ENCODE measurements at regions of chr7 and their contacts with region 1.

Region 1: GRCh38 chr7:95871078-95871782 is 98.9 kb downstream of the DYNC1I1 start:
- DNase-seq: no peak
- ATAC-seq: peak; percentile 69
- H3K4me3 ChIP-seq: no peak overlapping the region
- H3K27ac ChIP-seq: no peak overlapping the region
- H3K4me1 ChIP-seq: no peaks in the 10 kb centered on the region
- H3K27me3 ChIP-seq: no peaks in the 10 kb centered on the region
- CTCF ChIP-seq: peak; percentile 55 to 77 (median 63)
- EP300 ChIP-seq: no peak
- POLR2A ChIP-seq: no peak
- RAD21 ChIP-seq: peak; percentile 70

Region 2: GRCh38 chr7:95527033-95527775 is 344.0 kb before region 1 on chr7:
- CTCF ChIA-PET with region 1: interaction called, 45 read pairs
- POLR2A ChIA-PET with region 1: no interaction called
- RAD21 ChIA-PET with region 1: interaction called, 15 read pairs
- SMC1A ChIA-PET with region 1: interaction called, 24 read pairs
- in situ Hi-C with region 1: no loop called
- intact Hi-C with region 1: loop called (anchors 5 kb)
- DNase-seq: no peak
- ATAC-seq: peak; percentile 92
- H3K4me3 ChIP-seq: no peak overlapping the region
- H3K27ac ChIP-seq: no peak overlapping the region
- H3K4me1 ChIP-seq: no peaks in the 10 kb centered on the region
- H3K27me3 ChIP-seq: no peaks in the 10 kb centered on the region
- CTCF ChIP-seq: peak; percentile 73 to 83 (median 82)
- EP300 ChIP-seq: no peak
- POLR2A ChIP-seq: no peak
- RAD21 ChIP-seq: peak; percentile 96

Region 3: GRCh38 chr7:95730493-95731280 is 140.5 kb before region 1 on chr7:
- CTCF ChIA-PET with region 1: interaction called, 421 read pairs
- POLR2A ChIA-PET with region 1: no interaction called
- RAD21 ChIA-PET with region 1: interaction called, 183 read pairs
- SMC1A ChIA-PET with region 1: interaction called, 176 read pairs
- in situ Hi-C with region 1: no loop called
- intact Hi-C with region 1: no loop called
- DNase-seq: no peak
- ATAC-seq: no peak
- H3K4me3 ChIP-seq: no peak overlapping the region
- H3K27ac ChIP-seq: no peak overlapping the region
- H3K4me1 ChIP-seq: no peaks in the 10 kb centered on the region
- H3K27me3 ChIP-seq: no peaks in the 10 kb centered on the region
- CTCF ChIP-seq: no peak
- EP300 ChIP-seq: no peak
- POLR2A ChIP-seq: no peak
- RAD21 ChIP-seq: no peak

Region 4: DNA sequence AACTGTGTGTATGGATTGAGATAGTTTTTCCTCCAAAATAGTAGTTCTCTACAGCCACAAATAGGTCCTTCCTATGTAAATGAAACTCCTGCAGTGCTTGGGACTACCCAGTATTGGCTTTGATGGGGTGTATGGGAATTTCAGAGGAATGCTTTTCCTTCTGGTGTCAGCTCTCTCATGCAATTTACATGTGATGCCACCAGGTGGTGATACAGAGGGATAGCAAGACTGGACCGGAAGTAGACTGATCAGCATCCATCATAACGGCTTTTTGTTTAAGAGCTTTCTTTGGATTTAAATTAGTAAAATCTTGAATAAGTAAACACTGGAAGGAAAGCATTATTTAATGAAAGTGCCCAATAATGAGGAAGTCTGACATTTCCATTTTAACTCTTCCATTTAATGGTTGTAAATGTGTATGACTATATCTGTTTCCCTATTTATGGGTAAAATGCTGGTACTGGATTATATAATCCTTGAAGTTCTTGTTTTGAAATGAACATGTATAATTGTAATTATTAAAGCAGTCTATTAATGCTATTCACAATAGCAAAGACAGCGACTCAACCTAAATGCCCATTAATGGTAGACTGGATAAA is 76.2 kb before region 1 on chr7:
- CTCF ChIA-PET with region 1: interaction called, 52 read pairs
- POLR2A ChIA-PET with region 1: no interaction called
- RAD21 ChIA-PET with region 1: interaction called, 15 read pairs
- SMC1A ChIA-PET with region 1: interaction called, 26 read pairs
- in situ Hi-C with region 1: no loop called
- intact Hi-C with region 1: loop called (anchors 2 kb)
- DNase-seq: no peak
- ATAC-seq: peak; percentile 70
- H3K4me3 ChIP-seq: no peak overlapping the region
- H3K27ac ChIP-seq: no peak overlapping the region
- H3K4me1 ChIP-seq: no peaks in the 10 kb centered on the region
- H3K27me3 ChIP-seq: peaks cover 0 to 2% of the 10 kb centered on the region in 2 experiments; a peak in 1 of 4 replicates
- CTCF ChIP-seq: peak; percentile 31 to 63 (median 56)
- EP300 ChIP-seq: no peak
- POLR2A ChIP-seq: no peak
- RAD21 ChIP-seq: 0 out of 2 replicates have a peak, but pooled peaks have one; percentile 29

Region 5: GRCh38 chr7:95840953-95841950 is 30.0 kb before region 1 on chr7:
- CTCF ChIA-PET with region 1: interaction called, 50 read pairs
- POLR2A ChIA-PET with region 1: no interaction called
- RAD21 ChIA-PET with region 1: interaction called, 8 read pairs
- SMC1A ChIA-PET with region 1: interaction called, 28 read pairs
- in situ Hi-C with region 1: no loop called
- intact Hi-C with region 1: no loop called
- DNase-seq: no peak
- ATAC-seq: peak; percentile 98
- H3K4me3 ChIP-seq: no peak overlapping the region
- H3K27ac ChIP-seq: no peak overlapping the region
- H3K4me1 ChIP-seq: no peaks in the 10 kb centered on the region
- H3K27me3 ChIP-seq: no peaks in the 10 kb centered on the region
- CTCF ChIP-seq: peak; percentile 30 to 56 (median 43)
- EP300 ChIP-seq: no peak
- POLR2A ChIP-seq: no peak
- RAD21 ChIP-seq: no peak

Region 6: DNA sequence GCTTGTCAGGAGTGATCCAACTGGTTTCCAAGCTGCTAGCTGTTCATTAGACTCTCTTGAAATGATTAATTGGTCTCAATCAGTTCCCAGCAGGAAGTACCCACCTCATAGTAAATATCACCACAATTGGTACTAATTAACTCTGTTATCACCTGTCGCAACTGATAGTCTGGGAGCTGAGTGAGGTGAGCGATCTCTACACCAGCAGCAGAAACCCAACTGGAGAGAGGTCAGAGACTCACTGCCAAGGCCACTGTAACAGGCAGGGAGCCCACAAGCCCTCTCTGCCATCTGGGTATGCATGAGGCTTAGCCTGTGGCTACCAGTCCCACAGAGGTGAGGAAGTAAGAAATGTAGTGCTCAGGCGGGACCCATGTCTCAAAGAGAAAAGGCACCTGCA is 146.6 kb after region 1 on chr7:
- CTCF ChIA-PET with region 1: no interaction called
- POLR2A ChIA-PET with region 1: no interaction called
- RAD21 ChIA-PET with region 1: no interaction called
- SMC1A ChIA-PET with region 1: no interaction called
- in situ Hi-C with region 1: no loop called
- intact Hi-C with region 1: no loop called
- DNase-seq: no peak
- ATAC-seq: no peak
- H3K4me3 ChIP-seq: no peak overlapping the region
- H3K27ac ChIP-seq: no peak overlapping the region
- H3K4me1 ChIP-seq: no peaks in the 10 kb centered on the region
- H3K27me3 ChIP-seq: peaks cover 0 to 2% of the 10 kb centered on the region in 2 experiments; a peak in 3 of 4 replicates
- CTCF ChIP-seq: no peak
- EP300 ChIP-seq: no peak
- POLR2A ChIP-seq: no peak
- RAD21 ChIP-seq: no peak